HepG2 (cell line): ENCODE measurements at regions of chr2 and their contacts with region 1.

Region 1: GRCh38 chr2:75516378-75517360 is 44.1 kb downstream of the EVA1A start:
- DNase-seq: peak; percentile 99
- ATAC-seq: peak; percentile 93
- H3K4me3 ChIP-seq: peak overlapping the region in 1 of 3 experiments; percentile 24; a peak in 1 of 6 replicates
- H3K27ac ChIP-seq: peak overlapping the region; percentile 92
- H3K4me1 ChIP-seq: peaks cover 84% of the 10 kb centered on the region
- H3K27me3 ChIP-seq: no peaks in the 10 kb centered on the region
- CTCF ChIP-seq: no peak
- EP300 ChIP-seq: peak; percentile 84 to 100; a peak in 3 of 4 replicates
- POLR2A ChIP-seq: peak; percentile 23 to 36; a peak in 1 of 4 replicates
- RAD21 ChIP-seq: no peak; the same call in 1 of the 2 replicates

Region 2: DNA sequence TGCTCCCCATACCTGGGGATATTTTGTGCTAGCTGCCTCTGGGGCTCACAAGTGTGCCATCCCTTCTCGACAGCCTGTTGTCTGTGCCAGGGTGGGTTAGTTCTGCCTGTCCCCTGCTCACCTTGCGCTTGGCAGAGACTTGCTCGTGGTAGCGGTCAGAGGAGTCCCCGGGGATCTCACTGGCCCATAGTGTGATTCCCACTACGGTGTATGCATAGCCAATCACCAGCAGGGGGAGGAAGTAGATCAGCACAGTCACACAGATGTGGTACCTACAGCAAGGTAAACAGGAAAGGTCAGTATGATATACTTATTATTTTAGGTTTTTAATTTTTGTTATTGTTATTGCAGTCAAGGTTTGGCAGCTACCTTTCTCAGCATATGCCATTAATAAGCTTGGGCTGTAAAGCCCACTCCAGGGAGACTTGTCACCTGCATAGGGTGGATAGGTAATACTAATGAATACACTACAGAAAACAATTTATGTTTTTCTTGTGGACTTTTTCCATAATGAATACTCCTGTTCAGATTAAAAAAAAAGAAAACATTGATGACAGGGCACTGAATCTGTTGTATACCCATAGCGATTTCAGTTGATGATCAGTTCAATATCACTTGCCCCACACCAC is 463.1 kb before region 1 on chr2:
- CTCF ChIA-PET with region 1: no interaction called
- POLR2A ChIA-PET with region 1: no interaction called
- in situ Hi-C with region 1: no loop called
- intact Hi-C with region 1: no loop called
- DNase-seq: peak; percentile 65
- ATAC-seq: peak; percentile 100
- H3K4me3 ChIP-seq: no peak overlapping the region
- H3K27ac ChIP-seq: no peak overlapping the region
- H3K4me1 ChIP-seq: no peaks in the 10 kb centered on the region
- H3K27me3 ChIP-seq: no peaks in the 10 kb centered on the region
- CTCF ChIP-seq: peak; percentile 88
- EP300 ChIP-seq: no peak
- POLR2A ChIP-seq: no peak
- RAD21 ChIP-seq: 0 out of 2 replicates have a peak, but pooled peaks have one; percentile 27

Region 3: GRCh38 chr2:75480971-75481836 is 35.5 kb before region 1 on chr2:
- CTCF ChIA-PET with region 1: no interaction called
- POLR2A ChIA-PET with region 1: interaction called, 32 read pairs
- in situ Hi-C with region 1: no loop called
- intact Hi-C with region 1: loop called (anchors 1 kb)
- DNase-seq: peak; percentile 88
- ATAC-seq: peak; percentile 95
- H3K4me3 ChIP-seq: peak overlapping the region in 1 of 3 experiments; percentile 29; a peak in 1 of 6 replicates
- H3K27ac ChIP-seq: peak overlapping the region; percentile 69
- H3K4me1 ChIP-seq: peaks cover 52% of the 10 kb centered on the region
- H3K27me3 ChIP-seq: no peaks in the 10 kb centered on the region
- CTCF ChIP-seq: peak; percentile 76
- EP300 ChIP-seq: peak in 1 of 2 experiments; percentile 98; a peak in 2 of 4 replicates
- POLR2A ChIP-seq: 0 out of 4 replicates have a peak, but pooled peaks of 1 of the 2 experiments have one; percentile 12
- RAD21 ChIP-seq: 0 out of 2 replicates have a peak, but pooled peaks have one; percentile 16

Region 4: GRCh38 chr2:75548036-75548573 is 31.4 kb after region 1 on chr2:
- CTCF ChIA-PET with region 1: no interaction called
- POLR2A ChIA-PET with region 1: interaction called, 73 read pairs
- in situ Hi-C with region 1: no loop called
- intact Hi-C with region 1: no loop called
- DNase-seq: no peak
- ATAC-seq: no peak
- H3K4me3 ChIP-seq: no peak overlapping the region
- H3K27ac ChIP-seq: no peak overlapping the region
- H3K4me1 ChIP-seq: peaks cover 97% of the 10 kb centered on the region
- H3K27me3 ChIP-seq: no peaks in the 10 kb centered on the region
- CTCF ChIP-seq: no peak
- EP300 ChIP-seq: no peak
- POLR2A ChIP-seq: 0 out of 4 replicates have a peak, but pooled peaks of 1 of the 2 experiments have one; percentile 6
- RAD21 ChIP-seq: no peak